Dorsolateral prefrontal cortex (tissue), 120 donors: ENCODE measurements at regions of chrX and their contacts with region 1.

Region 1: GRCh38 chrX:66030505-66031317 is 9.2 kb downstream of the VSIG4 start:
- DNase-seq: no peak
- H3K4me3 ChIP-seq: no peak overlapping the region
- H3K27ac ChIP-seq: no peak overlapping the region
- H3K27me3 ChIP-seq: peaks cover 0 to 80% (median 34%) of the 10 kb centered on the region in 45 donors
- CTCF ChIP-seq: peak in 54 of 56 donors; percentile 18 to 65 (median 48)

Region 2: DNA sequence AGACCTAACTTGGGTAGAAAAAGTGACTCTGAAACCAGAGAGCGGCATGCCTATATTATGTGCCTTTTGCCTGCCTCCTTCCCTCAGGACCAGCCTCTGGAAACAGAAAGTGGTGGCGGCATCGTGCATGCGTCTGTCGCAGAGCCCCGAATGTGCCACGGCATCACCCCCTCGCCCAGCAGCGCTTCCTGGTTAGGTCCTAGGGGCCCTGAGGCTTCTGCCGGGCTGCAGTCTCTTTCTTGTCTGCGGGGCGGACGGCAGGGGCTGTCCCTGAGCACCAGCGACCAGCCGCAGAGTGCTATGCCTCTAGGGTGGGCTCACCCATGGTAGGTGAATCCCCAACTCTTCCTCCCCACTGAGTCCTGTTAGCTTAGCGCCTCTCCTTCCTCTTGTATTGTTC is 59.6 kb before region 1 on chrX:
- intact Hi-C with region 1: no loop called
- DNase-seq: no peak
- H3K4me3 ChIP-seq: peak overlapping the region in 2 of 59 donors; percentile 3 to 4
- H3K27ac ChIP-seq: no peak overlapping the region
- H3K27me3 ChIP-seq: peaks cover 0 to 68% (median 22%) of the 10 kb centered on the region in 45 donors
- CTCF ChIP-seq: no peak

Region 3: GRCh38 chrX:65997978-65998717 is 32.6 kb before region 1 on chrX:
- intact Hi-C with region 1: no loop called
- DNase-seq: no peak
- H3K4me3 ChIP-seq: no peak overlapping the region
- H3K27ac ChIP-seq: no peak overlapping the region
- H3K27me3 ChIP-seq: peaks cover 0 to 78% (median 20%) of the 10 kb centered on the region in 45 donors
- CTCF ChIP-seq: no peak

Region 4: GRCh38 chrX:66110112-66110511 is 79.4 kb after region 1 on chrX:
- intact Hi-C with region 1: no loop called
- DNase-seq: no peak
- H3K4me3 ChIP-seq: no peak overlapping the region
- H3K27ac ChIP-seq: no peak overlapping the region
- H3K27me3 ChIP-seq: peaks cover 0 to 60% (median 16%) of the 10 kb centered on the region in 45 donors
- CTCF ChIP-seq: peak in 53 of 56 donors; percentile 18 to 65 (median 45)

Region 5: DNA sequence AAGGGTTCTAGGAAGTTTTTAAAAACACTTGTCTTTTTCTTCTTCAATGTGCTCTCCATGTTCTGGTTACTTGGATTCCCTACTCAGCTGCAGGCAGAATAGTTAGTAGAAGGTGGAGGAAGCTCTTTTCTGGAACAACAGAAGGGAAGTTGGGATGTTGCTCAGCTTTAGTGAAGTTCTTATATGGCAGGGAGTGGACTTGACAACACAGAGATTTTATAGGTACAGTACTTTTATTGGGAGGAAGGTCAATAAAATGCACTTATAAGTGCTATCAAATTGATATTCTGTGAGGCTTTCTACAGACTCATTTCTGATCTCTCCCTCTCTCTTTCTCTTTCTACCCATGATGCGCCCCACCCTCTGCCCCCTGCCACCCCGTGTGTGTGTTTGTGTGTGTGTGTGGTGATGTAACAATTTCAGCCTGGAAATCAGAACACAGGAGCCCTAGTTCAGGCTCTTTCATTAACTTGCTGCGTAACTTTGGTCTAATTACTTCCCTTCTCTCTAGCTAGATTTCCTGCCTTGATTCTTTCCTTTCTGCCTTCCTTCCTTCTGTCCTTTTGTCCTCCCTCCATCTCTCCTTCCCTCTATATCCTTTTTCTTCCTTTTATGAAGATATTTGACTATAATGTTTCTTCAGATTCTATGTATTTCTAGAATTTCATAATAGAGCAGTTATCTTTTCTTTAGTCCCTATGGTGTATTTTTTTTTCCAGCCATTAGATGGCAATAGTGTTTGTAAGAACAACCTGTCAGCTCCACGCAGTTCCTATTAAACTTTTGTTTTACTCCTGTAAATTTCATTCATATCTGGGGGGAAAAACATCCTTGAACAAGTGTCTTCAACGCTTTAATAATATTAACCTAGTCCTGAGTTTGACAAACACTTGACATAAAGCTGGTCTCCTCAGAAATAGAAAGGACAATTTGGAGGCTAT is 170.4 kb after region 1 on chrX:
- intact Hi-C with region 1: loop called in 1 of 2 experiments (anchors 2 kb)
- DNase-seq: no peak
- H3K4me3 ChIP-seq: peak overlapping the region in 1 of 59 donors; percentile 5
- H3K27ac ChIP-seq: no peak overlapping the region
- H3K27me3 ChIP-seq: peaks cover 0 to 82% (median 29%) of the 10 kb centered on the region in 45 donors
- CTCF ChIP-seq: peak in 53 of 56 donors; percentile 13 to 70 (median 46)